Endothelial cell of umbilical vein (primary cell): ENCODE measurements at regions of chr20 and their contacts with region 1.

Region 1: DNA sequence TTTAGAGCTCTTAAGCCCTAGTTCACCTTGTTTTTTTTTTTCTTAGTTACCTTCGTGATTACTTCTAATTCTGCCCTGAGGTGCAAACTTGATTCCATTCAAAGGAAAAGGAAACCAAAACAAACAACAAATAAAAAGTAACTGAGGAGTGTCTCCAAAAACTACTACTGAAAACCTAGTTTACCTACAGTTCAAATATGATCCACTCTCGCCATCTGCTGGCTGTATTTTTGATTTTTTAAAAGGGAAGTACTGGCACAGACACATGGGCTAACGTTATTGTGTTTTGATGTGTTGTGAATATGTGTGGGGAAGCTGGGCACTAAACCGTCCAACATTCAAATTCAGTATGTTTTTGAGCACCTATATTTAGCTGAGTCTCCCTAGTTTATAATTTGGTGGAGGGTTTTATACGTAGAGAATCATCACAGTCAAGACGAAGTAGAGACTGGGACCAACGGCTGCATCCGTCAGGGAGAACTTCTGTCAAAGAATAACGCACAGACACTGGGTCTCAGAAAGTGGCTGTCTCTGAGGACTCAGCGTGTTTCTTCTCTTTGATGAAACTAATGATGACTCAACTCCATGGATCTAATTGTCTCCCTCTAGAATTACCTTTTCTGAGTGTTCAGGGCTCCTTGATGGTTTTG is 373.5 kb upstream of the BTBD3 start:
- DNase-seq: peak; percentile 74
- H3K4me3 ChIP-seq: no peak overlapping the region
- H3K27ac ChIP-seq: no peak overlapping the region
- H3K4me1 ChIP-seq: peaks cover 9% of the 10 kb centered on the region
- H3K27me3 ChIP-seq: no peaks in the 10 kb centered on the region
- CTCF ChIP-seq: peak; percentile 16 to 44
- POLR2A ChIP-seq: no peak

Region 2: GRCh38 chr20:10090588-10091166 is 1453.5 kb before region 1 on chr20:
- CTCF ChIA-PET with region 1: interaction called, 3 read pairs
- POLR2A ChIA-PET with region 1: no interaction called
- dilution Hi-C with region 1: no loop called
- intact Hi-C with region 1: loop called (anchors 2 kb)
- DNase-seq: peak; percentile 67
- H3K4me3 ChIP-seq: no peak overlapping the region
- H3K27ac ChIP-seq: no peak overlapping the region
- H3K4me1 ChIP-seq: no peaks in the 10 kb centered on the region
- H3K27me3 ChIP-seq: no peaks in the 10 kb centered on the region
- CTCF ChIP-seq: peak; percentile 69 to 78
- POLR2A ChIP-seq: no peak

Region 3: GRCh38 chr20:10316582-10316981 is 1227.6 kb before region 1 on chr20:
- CTCF ChIA-PET with region 1: interaction called, 4 read pairs
- POLR2A ChIA-PET with region 1: no interaction called
- dilution Hi-C with region 1: no loop called
- intact Hi-C with region 1: loop called (anchors 5 kb)
- DNase-seq: peak; percentile 35
- H3K4me3 ChIP-seq: no peak overlapping the region
- H3K27ac ChIP-seq: no peak overlapping the region
- H3K4me1 ChIP-seq: no peaks in the 10 kb centered on the region
- H3K27me3 ChIP-seq: no peaks in the 10 kb centered on the region
- CTCF ChIP-seq: peak; percentile 14 to 37
- POLR2A ChIP-seq: no peak

Region 4: DNA sequence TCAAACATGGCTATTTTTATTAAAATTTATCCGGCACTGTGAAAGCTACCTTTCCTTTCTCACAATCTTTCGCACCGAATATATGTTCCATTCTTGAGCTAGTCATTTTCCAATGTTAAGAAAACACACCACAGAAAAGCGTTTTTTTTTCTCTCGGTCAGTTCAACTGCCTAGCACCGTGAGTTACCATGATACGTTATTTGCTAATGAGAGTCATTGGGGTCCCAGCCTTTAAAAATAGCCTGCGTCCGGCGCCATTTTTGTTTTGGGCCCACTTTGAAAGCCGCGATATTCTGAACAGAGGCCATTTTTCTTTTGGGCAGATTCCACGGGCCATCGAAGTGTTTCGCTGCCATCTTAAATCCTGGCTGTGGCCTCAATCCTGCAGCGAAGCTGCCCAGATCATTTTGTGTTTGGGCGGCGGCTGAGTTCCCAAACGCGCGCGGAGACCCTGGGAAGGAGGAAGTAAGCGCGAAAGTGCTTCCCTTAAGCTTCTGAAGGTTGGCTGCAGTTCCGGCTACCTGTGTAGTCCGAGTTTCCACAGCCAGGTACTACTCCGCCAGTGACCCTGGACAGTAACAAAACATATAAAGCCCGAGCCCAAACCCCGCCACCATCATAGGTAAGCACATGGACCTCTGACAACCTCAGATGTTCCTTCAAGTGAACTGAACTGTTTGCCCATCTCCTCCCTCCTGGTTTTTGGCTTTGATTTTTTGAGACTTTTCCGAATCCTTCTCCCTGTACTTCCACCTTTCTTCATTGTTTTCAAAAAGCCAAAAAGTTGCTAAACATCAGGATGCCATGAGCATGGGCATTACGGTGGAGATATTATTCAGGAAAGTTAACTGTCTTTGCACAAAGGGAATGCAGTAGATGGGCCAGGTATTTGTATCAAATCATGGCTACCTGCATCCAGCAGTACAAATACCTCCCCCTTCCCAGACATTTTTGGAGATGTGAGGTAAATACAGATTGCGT is 1109.0 kb before region 1 on chr20 and contains the start of gene SLX4IP:
- CTCF ChIA-PET with region 1: interaction called, 3 read pairs
- POLR2A ChIA-PET with region 1: no interaction called
- dilution Hi-C with region 1: no loop called
- intact Hi-C with region 1: loop called (anchors 10 kb)
- DNase-seq: peak; percentile 95
- H3K4me3 ChIP-seq: peak within 1 kb of the TSS; percentile 96 to 99 (median 97)
- H3K27ac ChIP-seq: peak within 1 kb of the TSS; percentile 97
- H3K4me1 ChIP-seq: peaks cover 15% of the 10 kb centered on the region
- H3K27me3 ChIP-seq: no peaks in the 10 kb centered on the region
- CTCF ChIP-seq: no peak
- POLR2A ChIP-seq: peak; percentile 63
- total RNA-seq, gene SLX4IP: 4.1 and 4.5 TPM in 2 replicates

Region 5: GRCh38 chr20:10536531-10536930 is 1007.6 kb before region 1 on chr20:
- CTCF ChIA-PET with region 1: interaction called, 4 read pairs
- POLR2A ChIA-PET with region 1: no interaction called
- dilution Hi-C with region 1: no loop called
- intact Hi-C with region 1: loop called (anchors 5 kb)
- DNase-seq: peak; percentile 41
- H3K4me3 ChIP-seq: no peak overlapping the region
- H3K27ac ChIP-seq: no peak overlapping the region
- H3K4me1 ChIP-seq: peaks cover 18% of the 10 kb centered on the region
- H3K27me3 ChIP-seq: no peaks in the 10 kb centered on the region
- CTCF ChIP-seq: peak; percentile 49 to 57
- POLR2A ChIP-seq: no peak

Region 6: DNA sequence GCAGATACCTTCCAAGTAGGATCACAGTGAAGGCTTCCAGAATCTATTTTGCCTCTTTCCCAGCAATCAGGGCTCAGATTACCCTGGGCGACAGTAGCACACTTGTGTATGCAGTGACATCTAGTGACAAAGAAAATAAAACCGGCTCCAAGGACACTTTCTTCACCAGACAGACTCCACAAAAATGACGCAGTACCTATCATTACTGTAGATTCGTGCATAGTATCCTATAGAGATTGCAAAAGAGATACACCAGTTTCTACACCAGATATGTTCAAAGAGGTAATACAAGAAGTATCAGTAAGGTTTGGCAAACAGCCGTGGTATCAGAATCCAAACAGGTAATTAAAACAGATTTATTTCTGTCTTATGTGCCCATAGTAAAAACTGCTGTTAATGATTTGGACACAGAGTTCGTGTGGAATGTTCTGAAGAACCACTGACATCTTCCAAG is 270.0 kb before region 1 on chr20:
- CTCF ChIA-PET with region 1: interaction called, 17 read pairs
- POLR2A ChIA-PET with region 1: no interaction called
- dilution Hi-C with region 1: no loop called
- intact Hi-C with region 1: loop called (anchors 1 kb)
- DNase-seq: peak; percentile 74
- H3K4me3 ChIP-seq: no peak overlapping the region
- H3K27ac ChIP-seq: no peak overlapping the region
- H3K4me1 ChIP-seq: no peaks in the 10 kb centered on the region
- H3K27me3 ChIP-seq: no peaks in the 10 kb centered on the region
- CTCF ChIP-seq: peak; percentile 42 to 46
- POLR2A ChIP-seq: no peak

Region 7: DNA sequence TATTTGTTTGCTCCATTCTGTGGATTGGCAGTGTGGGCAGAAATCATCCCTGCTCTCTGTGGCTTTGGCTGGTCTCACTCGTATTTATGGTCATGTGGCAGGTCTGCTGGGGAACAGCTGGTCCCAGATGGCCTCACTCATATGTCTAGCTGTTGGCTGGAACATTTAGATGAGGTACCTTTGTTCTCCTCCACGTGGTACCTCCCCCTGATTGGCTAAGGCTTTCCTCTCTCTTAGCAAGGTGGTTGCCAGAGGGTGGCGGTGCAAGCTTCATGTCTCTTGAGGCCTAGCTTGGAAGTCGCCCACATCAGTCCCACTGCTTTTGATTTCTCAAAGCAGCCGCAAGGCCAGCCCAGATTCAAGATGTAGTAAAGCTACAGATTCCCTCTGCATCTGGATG is 25.0 kb after region 1 on chr20:
- CTCF ChIA-PET with region 1: no interaction called
- POLR2A ChIA-PET with region 1: no interaction called
- dilution Hi-C with region 1: no loop called
- intact Hi-C with region 1: no loop called
- DNase-seq: no peak
- H3K4me3 ChIP-seq: no peak overlapping the region
- H3K27ac ChIP-seq: no peak overlapping the region
- H3K4me1 ChIP-seq: no peaks in the 10 kb centered on the region
- H3K27me3 ChIP-seq: no peaks in the 10 kb centered on the region
- CTCF ChIP-seq: no peak
- POLR2A ChIP-seq: no peak

Region 8: DNA sequence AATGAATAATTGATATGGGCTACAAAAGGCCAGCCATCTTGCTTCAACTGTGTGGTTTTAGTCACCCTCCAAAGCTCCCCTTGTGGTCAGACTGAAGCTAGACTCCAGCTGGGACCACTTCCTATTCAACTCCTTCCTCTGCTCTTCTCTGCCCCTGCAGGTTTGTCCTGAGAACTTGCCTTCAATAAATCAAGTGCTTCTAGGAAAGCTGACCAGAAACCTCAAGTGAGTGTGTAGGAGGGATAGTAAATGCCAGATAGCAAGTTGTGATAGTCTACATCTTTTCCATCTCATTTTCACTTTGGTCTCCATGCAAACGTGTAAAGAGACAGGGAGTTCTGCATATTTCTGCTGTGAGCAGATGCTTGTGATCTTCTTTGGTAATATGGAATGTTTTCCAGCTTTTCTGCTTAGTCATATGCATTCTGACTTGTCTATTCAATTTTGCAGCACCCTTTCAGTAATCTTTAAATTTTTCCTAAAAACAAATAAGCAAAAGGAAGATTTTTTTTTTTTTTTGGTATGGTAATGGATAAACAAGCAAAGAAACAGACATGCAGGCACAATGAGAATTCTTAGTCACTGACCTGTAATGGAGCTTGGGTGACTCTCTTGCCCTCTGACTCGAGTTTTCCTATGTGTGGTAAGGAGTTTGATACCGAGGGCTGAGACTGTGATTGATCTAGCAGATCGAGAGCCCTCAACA is 172.2 kb after region 1 on chr20:
- CTCF ChIA-PET with region 1: no interaction called
- POLR2A ChIA-PET with region 1: no interaction called
- dilution Hi-C with region 1: no loop called
- intact Hi-C with region 1: no loop called
- DNase-seq: peak; percentile 36
- H3K4me3 ChIP-seq: no peak overlapping the region
- H3K27ac ChIP-seq: no peak overlapping the region
- H3K4me1 ChIP-seq: no peaks in the 10 kb centered on the region
- H3K27me3 ChIP-seq: peaks cover 0 to 2% of the 10 kb centered on the region in 2 experiments
- CTCF ChIP-seq: peak; percentile 43 to 49
- POLR2A ChIP-seq: no peak